Sigmoid colon (tissue), 7 donors: ENCODE measurements at regions of chr6 and their contacts with region 1.

Region 1: DNA sequence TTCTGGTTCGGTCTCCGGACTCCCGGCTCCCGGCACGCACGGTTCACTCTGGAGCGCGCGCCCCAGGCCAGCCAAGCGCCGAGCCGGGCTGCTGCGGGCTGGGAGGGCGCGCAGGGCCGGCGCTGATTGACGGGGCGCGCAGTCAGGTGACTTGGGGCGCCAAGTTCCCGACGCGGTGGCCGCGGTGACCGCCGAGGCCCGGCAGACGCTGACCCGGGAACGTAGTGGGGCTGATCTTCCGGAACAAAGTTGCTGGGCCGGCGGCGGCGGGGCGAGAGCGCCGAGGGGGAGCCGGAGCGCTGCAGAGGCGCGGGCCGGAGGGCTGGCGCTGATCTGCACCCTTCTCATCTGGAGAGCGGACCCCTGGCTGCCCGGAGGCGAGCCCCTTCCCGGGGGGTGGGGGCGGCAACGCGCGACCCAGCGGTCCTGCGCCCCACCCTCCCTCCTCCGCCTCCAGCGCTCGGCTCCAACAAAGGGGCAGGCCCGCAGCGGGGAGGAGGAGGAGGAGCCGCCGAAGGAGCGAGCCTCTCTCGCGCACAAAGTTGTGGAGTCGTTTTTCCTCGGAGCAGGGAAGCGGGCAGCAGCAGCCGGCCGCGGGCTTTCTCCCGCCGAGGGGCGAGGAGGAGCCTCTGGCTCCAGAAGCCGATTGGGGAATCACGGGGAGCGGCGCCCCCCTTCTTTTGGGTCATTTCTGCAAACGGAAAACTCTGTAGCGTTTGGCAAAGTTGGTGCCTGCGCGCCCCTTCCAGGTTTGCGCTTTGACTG is at the start of gene UTRN:
- DNase-seq: peak; percentile 90
- H3K4me3 ChIP-seq: peak within 1 kb of the TSS; percentile 50 to 93 (median 87)
- H3K27ac ChIP-seq: peak within 1 kb of the TSS; percentile 91 to 95 (median 94)
- H3K4me1 ChIP-seq: peaks cover 0 to 25% (median 13%) of the 10 kb centered on the region in 4 donors
- H3K27me3 ChIP-seq: no peaks in the 10 kb centered on the region
- CTCF ChIP-seq: no peak
- EP300 ChIP-seq: no peak
- POLR2A ChIP-seq: peak; percentile 21 to 24
- total RNA-seq, gene UTRN: 36.2 to 143 (median 112) TPM

Region 2: DNA sequence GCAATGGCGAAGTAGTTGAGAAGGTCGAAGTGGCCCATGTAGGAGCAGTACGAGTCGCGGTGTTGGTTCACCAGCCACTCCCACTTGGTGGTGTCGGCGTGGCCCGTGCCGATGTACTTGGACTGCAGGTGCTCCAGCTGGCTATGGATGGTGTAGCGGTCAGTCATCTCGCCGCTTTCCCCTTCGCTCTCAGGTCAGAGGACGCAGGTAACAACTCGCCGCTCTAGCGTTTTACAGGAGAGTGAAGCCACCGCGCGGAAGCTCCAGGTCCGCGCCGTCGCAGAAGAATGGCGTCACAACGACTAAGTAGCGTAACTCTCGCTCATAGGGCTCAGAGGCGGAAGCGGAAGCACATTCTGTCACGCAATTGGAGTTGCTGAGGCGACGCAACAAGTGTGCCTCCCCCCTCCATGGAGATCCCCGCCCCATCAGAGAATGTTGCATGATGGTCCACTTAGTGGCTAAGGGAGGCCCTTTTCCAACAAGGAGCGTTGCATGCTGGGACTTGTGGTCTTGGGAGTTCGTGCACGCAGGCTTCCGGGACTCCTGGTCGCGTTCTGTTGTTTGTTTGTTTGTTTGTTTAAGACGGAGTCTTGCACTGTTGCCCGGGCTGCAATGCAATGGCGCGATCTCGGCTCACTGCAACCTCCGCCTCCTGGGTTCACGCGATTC is 189.5 kb before region 1 on chr6 and contains the start of gene SF3B5:
- intact Hi-C with region 1: loop called (anchors 5 kb)
- DNase-seq: peak; percentile 99
- H3K4me3 ChIP-seq: peak within 1 kb of the TSS; percentile 79 to 90 (median 86)
- H3K27ac ChIP-seq: peak within 1 kb of the TSS; percentile 88 to 93 (median 90)
- H3K4me1 ChIP-seq: peaks cover 0 to 17% (median 16%) of the 10 kb centered on the region in 4 donors
- H3K27me3 ChIP-seq: no peaks in the 10 kb centered on the region
- CTCF ChIP-seq: no peak
- EP300 ChIP-seq: peak in 1 of 4 donors; percentile 42
- POLR2A ChIP-seq: peak; percentile 59 to 75
- total RNA-seq, gene SF3B5: 110 to 200 (median 171) TPM

Region 3: GRCh38 chr6:144408161-144408560 is 123.2 kb after region 1 on chr6:
- intact Hi-C with region 1: loop called (anchors 10 kb)
- DNase-seq: peak; percentile 70
- H3K4me3 ChIP-seq: no peak overlapping the region
- H3K27ac ChIP-seq: no peak overlapping the region
- H3K4me1 ChIP-seq: peaks cover 0 to 19% (median 5%) of the 10 kb centered on the region in 4 donors
- H3K27me3 ChIP-seq: no peaks in the 10 kb centered on the region
- CTCF ChIP-seq: no peak
- EP300 ChIP-seq: no peak
- POLR2A ChIP-seq: no peak

Region 4: DNA sequence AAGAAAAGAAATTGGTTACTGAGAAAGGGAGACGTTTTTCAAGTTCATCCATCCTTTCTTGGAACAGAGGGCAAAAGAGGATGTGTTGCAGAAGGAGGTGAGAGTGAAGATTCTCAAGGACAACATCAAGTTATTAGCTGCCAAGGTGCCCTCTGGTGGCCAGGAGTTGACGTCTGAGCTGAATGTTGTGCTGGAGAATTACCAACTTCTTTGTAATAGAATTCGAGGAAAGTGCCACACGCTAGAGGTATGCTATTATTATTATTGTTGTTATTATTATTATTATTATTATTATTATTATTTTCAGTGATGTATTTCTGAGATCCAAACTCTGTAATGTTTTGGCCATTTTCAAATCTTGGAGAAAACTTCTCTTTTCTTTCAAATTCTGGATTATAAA is 197.2 kb after region 1 on chr6:
- intact Hi-C with region 1: loop called (anchors 5 kb)
- DNase-seq: peak; percentile 79
- H3K4me3 ChIP-seq: no peak overlapping the region
- H3K27ac ChIP-seq: no peak overlapping the region
- H3K4me1 ChIP-seq: no peaks in the 10 kb centered on the region
- H3K27me3 ChIP-seq: no peaks in the 10 kb centered on the region
- CTCF ChIP-seq: peak in 3 of 4 experiments; percentile 26 to 56 (median 32)
- EP300 ChIP-seq: no peak
- POLR2A ChIP-seq: no peak